ENCODE measurements at regions of chr3 and their contacts with region 1.

Region 1: GRCh38 chr3:169850618-169851017 is 19.1 kb downstream of the LRRC31 start:
- DNase-seq: no peak
- ATAC-seq: no peak
- H3K4me3 ChIP-seq: no peak overlapping the region
- H3K4me3 Mint-ChIP-seq: no peak overlapping the region
- H3K27ac ChIP-seq: no peak overlapping the region
- H3K27ac Mint-ChIP-seq: no peak overlapping the region
- H3K4me1 ChIP-seq: no peaks in the 10 kb centered on the region
- H3K4me1 Mint-ChIP-seq: no peaks in the 10 kb centered on the region
- H3K27me3 ChIP-seq: no peaks in the 10 kb centered on the region
- H3K27me3 Mint-ChIP-seq: peaks cover 13% of the 10 kb centered on the region
- CTCF ChIP-seq: no peak

Region 2: DNA sequence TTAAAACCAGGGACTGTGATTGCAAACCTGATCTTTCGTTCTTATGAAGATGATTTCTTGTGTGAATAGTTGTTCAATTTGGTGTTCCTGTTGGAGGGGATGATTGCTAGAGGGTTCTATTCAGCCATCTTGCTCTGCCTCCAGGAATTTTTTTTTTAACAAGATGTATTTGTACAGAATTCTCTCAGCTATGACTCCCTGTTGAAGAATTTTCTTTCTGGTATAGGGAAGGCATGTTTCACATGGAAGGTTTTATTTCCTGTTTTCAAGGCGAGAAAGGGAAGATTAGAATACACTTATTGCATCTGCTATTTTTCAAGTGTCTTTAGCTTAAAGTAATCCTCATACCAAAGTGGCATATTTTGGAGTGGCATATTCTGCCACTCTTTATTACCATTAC is 32.3 kb before region 1 on chr3:
- CTCF ChIA-PET with region 1: no interaction called
- POLR2A ChIA-PET with region 1: no interaction called
- intact Hi-C with region 1: loop called in 1 of 2 experiments (anchors 5 kb)
- DNase-seq: no peak
- ATAC-seq: no peak
- H3K4me3 ChIP-seq: no peak overlapping the region
- H3K4me3 Mint-ChIP-seq: no peak overlapping the region
- H3K27ac ChIP-seq: no peak overlapping the region
- H3K27ac Mint-ChIP-seq: no peak overlapping the region
- H3K4me1 ChIP-seq: peaks cover 3% of the 10 kb centered on the region
- H3K4me1 Mint-ChIP-seq: peaks cover 10% of the 10 kb centered on the region
- H3K27me3 ChIP-seq: peaks cover 0 to 5% of the 10 kb centered on the region in 2 experiments
- H3K27me3 Mint-ChIP-seq: peaks cover 7% of the 10 kb centered on the region
- CTCF ChIP-seq: no peak

Measured in CD8-positive, alpha-beta T cell (primary cell).